ENCODE measurements at regions of chr3 and their contacts with region 1.

Region 1: GRCh38 chr3:10768708-10769394 is 47.2 kb upstream of the SLC6A11 start:
- DNase-seq: no peak
- ATAC-seq: no peak
- H3K4me3 ChIP-seq: no peak overlapping the region
- H3K4me3 Mint-ChIP-seq: no peak overlapping the region
- H3K27ac ChIP-seq: no peak overlapping the region
- H3K27ac Mint-ChIP-seq: no peak overlapping the region
- H3K4me1 ChIP-seq: no peaks in the 10 kb centered on the region
- H3K4me1 Mint-ChIP-seq: no peaks in the 10 kb centered on the region
- H3K27me3 ChIP-seq: peaks cover 0 to 11% (median 0%) of the 10 kb centered on the region in 4 experiments
- H3K27me3 Mint-ChIP-seq: peaks cover 56% of the 10 kb centered on the region
- CTCF ChIP-seq: no peak

Region 2: DNA sequence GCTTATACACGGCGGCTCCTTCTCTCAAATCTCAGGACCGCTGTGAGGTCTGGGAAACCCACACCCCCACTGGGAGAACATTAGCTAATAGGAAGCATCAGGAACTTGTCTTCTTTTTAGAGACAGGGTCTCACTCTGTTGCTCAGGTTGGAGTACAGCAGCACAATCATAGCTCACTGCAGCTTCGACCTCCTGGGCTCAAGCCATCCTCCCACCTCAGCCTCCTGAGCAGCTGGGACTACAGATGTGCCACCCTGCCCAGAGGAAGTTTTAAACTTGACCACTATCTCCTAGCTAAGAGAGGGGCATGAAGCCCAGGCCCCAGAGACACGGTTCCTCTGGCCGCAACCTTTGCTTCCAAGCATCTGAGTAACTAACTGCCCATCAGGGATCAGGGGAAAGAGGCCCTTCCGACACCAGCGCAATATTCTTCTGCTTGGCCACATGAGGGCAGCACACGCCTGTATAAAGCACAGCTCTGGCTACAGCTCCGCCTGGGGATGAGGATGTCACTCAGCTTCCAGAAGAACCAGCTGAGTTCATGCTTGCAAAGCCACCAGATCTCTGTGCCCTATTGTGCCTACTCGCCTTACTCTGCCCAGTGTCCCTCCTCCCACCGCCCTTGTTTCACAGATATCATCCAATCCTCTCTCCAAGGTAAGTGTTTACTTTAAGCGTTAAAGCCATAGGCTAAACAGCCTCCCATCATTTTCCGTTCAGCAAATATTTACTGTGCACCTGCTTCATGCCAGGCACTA is 10.4 kb before region 1 on chr3:
- CTCF ChIA-PET with region 1: interaction called, 21 read pairs
- POLR2A ChIA-PET with region 1: no interaction called
- intact Hi-C with region 1: no loop called
- DNase-seq: peak; percentile 63
- ATAC-seq: peak; percentile 56
- H3K4me3 ChIP-seq: no peak overlapping the region
- H3K4me3 Mint-ChIP-seq: no peak overlapping the region
- H3K27ac ChIP-seq: no peak overlapping the region
- H3K27ac Mint-ChIP-seq: no peak overlapping the region
- H3K4me1 ChIP-seq: no peaks in the 10 kb centered on the region
- H3K4me1 Mint-ChIP-seq: no peaks in the 10 kb centered on the region
- H3K27me3 ChIP-seq: peaks cover 0 to 7% (median 3%) of the 10 kb centered on the region in 4 experiments
- H3K27me3 Mint-ChIP-seq: peaks cover 44% of the 10 kb centered on the region
- CTCF ChIP-seq: peak; percentile 78

Region 3: DNA sequence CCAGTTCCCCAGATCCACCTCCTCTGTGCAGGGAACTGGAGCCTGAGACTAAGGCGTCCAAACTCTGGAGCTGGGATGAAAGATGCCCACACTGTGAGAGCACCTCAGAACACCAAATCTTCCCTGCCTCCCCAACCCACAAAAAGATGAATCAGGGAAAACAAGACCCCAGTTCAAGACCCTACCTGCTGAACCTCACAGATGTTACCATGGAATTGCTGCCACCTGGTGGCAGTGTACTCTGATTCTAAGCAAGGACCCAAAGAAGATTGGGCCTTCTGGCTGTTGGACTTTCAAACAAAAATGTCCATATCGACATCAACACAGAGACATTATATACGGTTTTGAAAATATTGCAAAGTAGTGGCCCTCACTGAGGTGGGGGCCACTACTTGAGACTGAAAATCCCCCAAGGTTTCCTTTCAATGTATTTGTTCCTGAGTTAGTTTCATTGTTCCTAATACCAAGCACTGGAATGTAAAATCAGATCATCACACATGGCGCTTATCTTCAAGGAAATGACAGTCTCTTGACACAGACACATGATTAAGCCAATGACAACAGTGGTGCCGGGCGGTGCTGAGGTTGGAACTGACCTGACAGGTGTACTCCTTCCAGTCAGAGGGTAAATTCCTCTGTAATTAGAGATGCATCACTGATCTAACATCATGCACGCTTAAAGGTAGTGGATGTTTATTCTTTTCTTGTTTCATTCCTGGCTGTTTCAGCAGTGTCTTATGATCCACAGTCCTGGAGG is 114.8 kb after region 1 on chr3:
- CTCF ChIA-PET with region 1: no interaction called
- POLR2A ChIA-PET with region 1: no interaction called
- intact Hi-C with region 1: no loop called
- DNase-seq: no peak
- ATAC-seq: no peak
- H3K4me3 ChIP-seq: no peak overlapping the region
- H3K4me3 Mint-ChIP-seq: no peak overlapping the region
- H3K27ac ChIP-seq: no peak overlapping the region
- H3K27ac Mint-ChIP-seq: no peak overlapping the region
- H3K4me1 ChIP-seq: no peaks in the 10 kb centered on the region
- H3K4me1 Mint-ChIP-seq: no peaks in the 10 kb centered on the region
- H3K27me3 ChIP-seq: peaks cover 0 to 4% (median 0%) of the 10 kb centered on the region in 4 experiments
- H3K27me3 Mint-ChIP-seq: peaks cover 29% of the 10 kb centered on the region
- CTCF ChIP-seq: no peak

Region 4: DNA sequence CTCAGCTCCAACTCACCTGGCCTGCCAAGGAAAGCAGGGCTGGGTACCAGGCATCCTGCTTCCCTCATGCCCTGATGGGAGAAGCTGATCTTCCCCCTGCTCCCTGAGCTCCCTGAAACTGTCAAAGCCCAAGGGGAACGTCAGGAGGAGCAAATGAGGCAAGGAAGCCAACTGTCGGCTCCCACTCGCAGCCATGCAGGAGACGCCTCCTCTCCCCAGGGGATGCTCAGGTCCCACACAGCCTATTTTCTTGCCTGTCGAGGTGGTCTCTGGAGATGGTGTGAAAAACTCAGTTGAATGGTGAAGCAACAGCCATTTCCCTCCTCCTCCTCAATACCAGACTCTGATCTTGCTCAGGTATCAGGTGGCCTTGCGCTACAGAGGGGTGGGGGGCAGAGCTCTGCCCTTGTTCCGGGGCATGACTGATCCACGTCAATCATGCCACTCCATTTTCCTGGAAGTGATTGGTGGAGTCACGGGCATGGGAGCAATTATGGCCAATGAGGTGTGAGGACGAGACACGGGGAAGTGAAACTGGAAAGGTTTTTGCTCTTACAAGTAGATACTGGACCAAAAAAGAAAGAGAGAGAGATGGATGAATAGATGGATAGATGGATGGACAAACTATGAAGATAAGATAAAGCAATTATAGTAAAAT is 281.9 kb after region 1 on chr3:
- CTCF ChIA-PET with region 1: no interaction called
- POLR2A ChIA-PET with region 1: no interaction called
- intact Hi-C with region 1: no loop called
- DNase-seq: no peak
- ATAC-seq: no peak
- H3K4me3 ChIP-seq: no peak overlapping the region
- H3K4me3 Mint-ChIP-seq: no peak overlapping the region
- H3K27ac ChIP-seq: no peak overlapping the region
- H3K27ac Mint-ChIP-seq: no peak overlapping the region
- H3K4me1 ChIP-seq: no peaks in the 10 kb centered on the region
- H3K4me1 Mint-ChIP-seq: peaks cover 3% of the 10 kb centered on the region
- H3K27me3 ChIP-seq: peaks cover 0 to 8% (median 0%) of the 10 kb centered on the region in 4 experiments
- H3K27me3 Mint-ChIP-seq: peaks cover 32% of the 10 kb centered on the region
- CTCF ChIP-seq: no peak

Measured in B cell (primary cell).